Posterior cingulate gyrus (tissue), 11 donors: ENCODE measurements at regions of chr2 and their contacts with region 1.

Region 1: GRCh38 chr2:239143858-239144718 is 256.7 kb downstream of the HDAC4 start:
- DNase-seq: peak in 6 of 10 donors; percentile 29 to 94 (median 68)

Region 2: GRCh38 chr2:239193925-239194677 is 50.0 kb after region 1 on chr2:
- intact Hi-C with region 1: loop called (anchors 5 kb)
- DNase-seq: peak in 7 of 10 donors; percentile 59 to 95 (median 71)